ENCODE measurements at regions of chr20 and their contacts with region 1.

Region 1: DNA sequence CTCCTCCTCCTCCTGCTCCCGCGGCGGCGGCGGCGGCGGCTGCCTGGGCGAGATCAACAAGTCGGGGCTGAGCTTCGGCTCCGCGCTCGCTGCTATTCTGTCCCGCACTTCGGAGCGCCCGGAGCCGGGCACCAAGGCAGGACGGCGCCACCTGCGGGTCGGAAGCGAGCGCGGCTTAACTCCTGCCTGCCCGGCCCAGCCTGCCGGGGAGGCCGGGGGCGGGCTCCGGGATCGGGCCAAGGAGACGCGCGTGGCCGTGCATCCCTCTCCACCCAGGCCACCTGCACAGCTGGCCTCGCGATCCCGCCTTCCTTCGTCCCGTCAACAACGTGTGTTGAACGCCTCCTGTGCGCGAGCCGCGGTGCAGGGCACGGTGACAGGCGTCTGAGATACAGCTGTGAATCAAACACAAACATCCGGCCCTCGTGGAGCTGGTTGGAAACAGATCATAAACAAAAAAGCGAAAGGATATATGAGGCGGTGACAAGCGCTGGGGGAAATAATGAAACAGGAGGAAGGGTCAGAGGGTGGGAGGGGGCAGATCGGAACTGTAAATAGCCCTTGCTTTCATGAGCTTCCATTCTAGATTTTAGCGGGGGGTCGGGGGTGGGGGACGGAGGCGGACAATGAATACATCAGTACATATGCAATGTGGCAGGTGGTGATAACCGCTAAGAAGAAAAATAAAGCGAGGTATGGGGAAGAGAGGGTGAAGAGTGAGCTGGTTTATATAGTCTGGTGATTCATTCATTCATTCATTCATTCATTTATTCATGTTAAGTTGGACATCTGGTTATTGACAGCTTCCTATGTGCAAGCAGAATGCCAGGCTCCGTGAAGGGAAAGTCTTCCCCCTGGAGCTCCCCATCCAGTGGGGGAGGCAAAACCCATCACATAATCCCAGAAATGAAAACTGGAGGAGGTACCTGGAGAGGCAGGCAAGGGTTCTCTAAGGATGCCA is 2.0 kb upstream of the KCNB1 start:
- DNase-seq: peak; percentile 42
- ATAC-seq: peak; percentile 71
- H3K4me3 Mint-ChIP-seq: peak overlapping the region; percentile 78
- H3K27ac Mint-ChIP-seq: no peak overlapping the region
- H3K4me1 Mint-ChIP-seq: peaks cover 8% of the 10 kb centered on the region
- H3K27me3 Mint-ChIP-seq: peaks cover 56% of the 10 kb centered on the region
- CTCF ChIP-seq: no peak

Region 2: GRCh38 chr20:47821481-47822439 is 1662.7 kb before region 1 on chr20:
- CTCF ChIA-PET with region 1: no interaction called
- POLR2A ChIA-PET with region 1: no interaction called
- intact Hi-C with region 1: loop called (anchors 5 kb)
- DNase-seq: no peak
- ATAC-seq: no peak
- H3K4me3 Mint-ChIP-seq: no peak overlapping the region
- H3K27ac Mint-ChIP-seq: no peak overlapping the region
- H3K4me1 Mint-ChIP-seq: peaks cover 14% of the 10 kb centered on the region
- H3K27me3 Mint-ChIP-seq: peaks cover 19% of the 10 kb centered on the region
- CTCF ChIP-seq: no peak

Region 3: GRCh38 chr20:49620364-49621240 is 136.1 kb after region 1 on chr20:
- CTCF ChIA-PET with region 1: no interaction called
- POLR2A ChIA-PET with region 1: no interaction called
- intact Hi-C with region 1: no loop called
- DNase-seq: peak; percentile 42
- ATAC-seq: peak; percentile 87
- H3K4me3 Mint-ChIP-seq: no peak overlapping the region
- H3K27ac Mint-ChIP-seq: no peak overlapping the region
- H3K4me1 Mint-ChIP-seq: peaks cover 14% of the 10 kb centered on the region
- H3K27me3 Mint-ChIP-seq: peaks cover 3% of the 10 kb centered on the region
- CTCF ChIP-seq: no peak

Region 4: GRCh38 chr20:49989234-49990065 is 505.0 kb after region 1 on chr20:
- CTCF ChIA-PET with region 1: no interaction called
- POLR2A ChIA-PET with region 1: interaction called, 12 read pairs
- intact Hi-C with region 1: no loop called
- DNase-seq: no peak
- ATAC-seq: no peak
- H3K4me3 Mint-ChIP-seq: no peak overlapping the region
- H3K27ac Mint-ChIP-seq: no peak overlapping the region
- H3K4me1 Mint-ChIP-seq: peaks cover 11% of the 10 kb centered on the region
- H3K27me3 Mint-ChIP-seq: no peaks in the 10 kb centered on the region
- CTCF ChIP-seq: no peak

Region 5: DNA sequence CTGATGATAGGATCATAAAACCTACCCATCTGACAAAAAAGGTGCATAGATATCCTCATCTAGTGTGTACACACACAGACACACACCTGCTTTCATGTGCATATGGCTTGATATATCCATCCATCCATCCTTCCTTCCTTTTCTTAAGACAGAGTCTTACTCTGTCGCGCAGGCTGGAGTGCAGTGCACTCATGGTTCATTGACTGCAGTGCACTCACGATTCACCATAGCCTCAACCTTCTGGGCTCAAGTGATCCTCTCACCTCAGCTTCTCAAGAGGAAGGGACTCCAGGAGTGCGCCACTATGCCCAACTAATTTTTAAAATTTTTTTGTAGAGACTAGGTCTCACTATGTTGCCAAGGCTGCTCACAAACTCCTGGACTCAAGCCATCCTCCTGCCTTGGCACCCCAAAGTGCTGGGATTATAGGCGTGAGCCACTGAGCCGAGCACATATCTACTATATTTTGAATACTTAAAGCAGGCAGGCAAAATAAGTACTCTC is 1419.7 kb after region 1 on chr20:
- CTCF ChIA-PET with region 1: no interaction called
- POLR2A ChIA-PET with region 1: interaction called, 13 read pairs
- intact Hi-C with region 1: no loop called
- DNase-seq: no peak
- ATAC-seq: no peak
- H3K4me3 Mint-ChIP-seq: no peak overlapping the region
- H3K27ac Mint-ChIP-seq: peak overlapping the region; percentile 30
- H3K4me1 Mint-ChIP-seq: peaks cover 49% of the 10 kb centered on the region
- H3K27me3 Mint-ChIP-seq: no peaks in the 10 kb centered on the region
- CTCF ChIP-seq: no peak

Measured in activated B cell treated with CpG ODN at 0.5 μM for 24 hours (primary cell).